ENCODE measurements at regions of chr4 and their contacts with region 1.

Region 1: DNA sequence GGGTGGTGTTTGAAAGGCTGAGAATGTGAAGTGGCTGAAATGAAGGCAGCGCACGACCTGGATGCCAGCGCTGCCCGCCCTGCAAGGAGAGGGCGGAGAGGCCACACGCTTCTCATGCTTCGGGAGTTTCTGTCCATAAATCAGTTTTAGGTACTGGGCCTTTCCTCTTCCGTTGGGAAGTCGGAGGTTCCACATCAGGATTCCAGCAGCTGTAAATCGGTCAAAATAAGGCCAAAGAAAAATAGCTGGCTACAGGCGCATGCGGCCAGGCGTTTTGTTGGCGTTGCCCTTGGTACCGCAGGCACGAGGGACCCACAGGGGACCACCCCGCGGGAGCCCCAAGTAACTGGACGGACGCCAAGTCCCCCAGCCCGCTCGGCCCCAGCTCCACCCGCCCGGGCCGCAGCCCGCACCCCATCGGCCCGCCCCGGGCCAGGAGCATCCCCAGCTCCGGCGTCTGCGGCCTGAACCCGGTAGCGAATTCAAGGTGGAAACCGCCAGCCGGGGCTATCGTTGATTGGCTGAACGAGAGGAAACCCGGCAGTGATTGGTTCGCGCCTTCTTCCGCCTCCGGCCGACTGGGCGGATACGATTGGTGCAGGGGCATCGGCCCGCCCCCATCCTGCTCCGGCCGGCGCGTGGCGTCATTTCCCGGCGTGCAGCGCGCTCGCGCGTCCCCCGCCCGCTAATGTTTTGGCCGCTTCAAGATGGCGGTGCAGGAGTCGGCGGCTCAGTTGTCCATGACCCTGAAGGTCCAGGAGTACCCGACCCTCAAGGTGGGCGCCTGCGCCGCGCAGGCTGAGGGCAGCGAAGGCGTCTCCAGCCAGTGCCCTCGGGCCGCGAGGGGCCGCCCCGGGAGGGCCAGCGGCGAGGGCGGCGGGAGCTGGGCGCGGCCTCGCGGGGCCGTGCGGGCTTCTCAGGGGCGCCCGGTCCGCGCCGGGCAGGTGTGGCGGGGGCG is at the start of gene MAEA:
- DNase-seq: peak; percentile 96
- H3K4me3 Mint-ChIP-seq: peak within 1 kb of the TSS; percentile 95
- H3K27ac Mint-ChIP-seq: peak within 1 kb of the TSS; percentile 95
- H3K4me1 Mint-ChIP-seq: peaks cover 22% of the 10 kb centered on the region
- H3K27me3 Mint-ChIP-seq: no peaks in the 10 kb centered on the region
- CTCF ChIP-seq: no peak
- total RNA-seq, gene MAEA: 78.8 and 89.6 TPM in 2 replicates

Region 2: DNA sequence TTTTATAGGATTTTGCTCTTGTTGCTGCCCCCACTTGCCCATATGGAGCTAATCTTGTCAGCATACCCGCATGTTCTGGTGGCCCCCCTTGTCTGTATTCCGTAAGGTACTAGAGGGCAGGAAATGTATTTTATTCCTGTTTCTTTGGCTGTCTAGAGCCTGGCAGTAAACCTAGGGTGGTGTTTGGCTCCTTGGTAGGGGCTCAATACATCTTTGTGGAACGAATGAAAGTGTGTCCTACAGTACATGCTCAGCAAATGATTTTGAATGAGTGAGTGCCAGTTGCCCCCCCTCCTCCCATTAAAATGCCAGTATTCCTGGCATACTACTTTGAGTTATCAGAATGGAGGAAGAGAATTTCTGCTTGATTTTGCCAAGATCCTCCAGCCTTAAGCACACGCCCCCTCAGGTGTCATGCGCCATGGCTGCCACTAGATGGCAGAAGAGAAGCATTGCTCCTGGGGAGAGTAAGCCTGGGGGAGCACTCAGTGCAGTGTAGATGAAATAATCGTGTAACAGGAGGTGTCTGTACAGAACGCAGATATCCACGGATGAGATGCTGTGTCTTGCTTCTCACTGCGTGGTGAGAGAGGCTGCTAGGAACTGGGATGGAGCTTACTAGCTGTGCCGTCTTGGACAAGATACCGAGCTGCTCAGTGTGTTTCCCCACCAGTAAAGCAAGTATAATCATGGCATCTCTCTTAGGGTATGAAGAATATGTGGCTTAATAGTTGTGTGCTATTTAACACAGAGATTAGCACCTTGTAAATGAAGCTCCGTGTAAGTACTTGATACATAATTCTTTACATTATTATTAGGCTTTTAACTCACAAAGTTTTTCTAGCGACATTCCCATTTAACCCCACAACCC is 158.9 kb before region 1 on chr4:
- CTCF ChIA-PET with region 1: interaction called, 15 read pairs
- POLR2A ChIA-PET with region 1: no interaction called
- intact Hi-C with region 1: no loop called
- DNase-seq: peak; percentile 79
- H3K4me3 Mint-ChIP-seq: no peak overlapping the region
- H3K27ac Mint-ChIP-seq: no peak overlapping the region
- H3K4me1 Mint-ChIP-seq: no peaks in the 10 kb centered on the region
- H3K27me3 Mint-ChIP-seq: peaks cover 47% of the 10 kb centered on the region
- CTCF ChIP-seq: peak; percentile 99

Region 3: GRCh38 chr4:1249148-1249730 is 40.2 kb before region 1 on chr4:
- CTCF ChIA-PET with region 1: no interaction called
- POLR2A ChIA-PET with region 1: interaction called, 41 read pairs
- intact Hi-C with region 1: no loop called
- DNase-seq: peak; percentile 80
- H3K4me3 Mint-ChIP-seq: peak overlapping the region; percentile 83
- H3K27ac Mint-ChIP-seq: peak overlapping the region; percentile 81
- H3K4me1 Mint-ChIP-seq: no peaks in the 10 kb centered on the region
- H3K27me3 Mint-ChIP-seq: no peaks in the 10 kb centered on the region
- CTCF ChIP-seq: no peak

Region 4: DNA sequence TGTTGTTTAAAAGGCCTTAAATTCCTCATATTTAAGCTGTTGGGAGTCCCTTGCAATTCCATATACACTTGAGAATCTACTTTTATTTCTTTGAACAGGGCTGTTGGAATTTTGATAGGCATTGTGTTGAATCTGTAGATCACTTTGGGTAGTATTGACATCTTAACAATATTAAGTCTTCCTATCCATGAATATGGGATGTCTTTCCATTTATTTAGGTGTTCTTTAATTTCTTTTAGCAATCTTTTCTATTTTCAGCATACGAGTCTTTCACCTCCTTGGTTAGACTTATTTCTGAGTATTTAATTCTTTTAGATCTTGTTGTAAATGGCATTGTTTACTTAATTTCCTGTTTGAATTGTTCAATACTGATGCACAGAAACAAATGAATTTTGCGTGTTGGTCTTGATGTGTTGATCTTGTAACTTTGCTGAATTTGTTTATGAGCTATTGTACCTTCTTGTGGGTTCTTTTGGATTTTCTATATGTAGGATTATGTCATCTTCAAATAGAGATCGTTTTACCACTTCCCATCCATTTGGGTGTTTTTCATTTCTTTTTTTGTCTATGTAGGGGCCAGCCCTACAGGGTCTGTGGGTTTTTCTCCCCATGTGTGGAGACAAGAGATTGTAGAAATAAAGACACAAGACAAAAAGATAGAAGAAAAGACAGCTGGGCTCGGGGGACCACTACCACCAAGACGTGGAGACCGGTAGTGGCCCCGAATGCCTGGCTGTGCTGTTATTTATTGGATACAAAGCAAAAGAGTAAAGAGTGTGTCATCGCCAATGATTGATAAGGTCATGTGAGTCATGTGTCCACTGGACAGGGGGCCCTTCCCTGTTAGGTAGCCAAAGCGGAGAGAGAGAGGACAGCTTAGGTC is 22.4 kb before region 1 on chr4:
- CTCF ChIA-PET with region 1: interaction called, 11 read pairs
- POLR2A ChIA-PET with region 1: interaction called, 4 read pairs
- intact Hi-C with region 1: no loop called
- DNase-seq: no peak
- H3K4me3 Mint-ChIP-seq: no peak overlapping the region
- H3K27ac Mint-ChIP-seq: no peak overlapping the region
- H3K4me1 Mint-ChIP-seq: no peaks in the 10 kb centered on the region
- H3K27me3 Mint-ChIP-seq: peaks cover 2% of the 10 kb centered on the region
- CTCF ChIP-seq: no peak

Region 5: DNA sequence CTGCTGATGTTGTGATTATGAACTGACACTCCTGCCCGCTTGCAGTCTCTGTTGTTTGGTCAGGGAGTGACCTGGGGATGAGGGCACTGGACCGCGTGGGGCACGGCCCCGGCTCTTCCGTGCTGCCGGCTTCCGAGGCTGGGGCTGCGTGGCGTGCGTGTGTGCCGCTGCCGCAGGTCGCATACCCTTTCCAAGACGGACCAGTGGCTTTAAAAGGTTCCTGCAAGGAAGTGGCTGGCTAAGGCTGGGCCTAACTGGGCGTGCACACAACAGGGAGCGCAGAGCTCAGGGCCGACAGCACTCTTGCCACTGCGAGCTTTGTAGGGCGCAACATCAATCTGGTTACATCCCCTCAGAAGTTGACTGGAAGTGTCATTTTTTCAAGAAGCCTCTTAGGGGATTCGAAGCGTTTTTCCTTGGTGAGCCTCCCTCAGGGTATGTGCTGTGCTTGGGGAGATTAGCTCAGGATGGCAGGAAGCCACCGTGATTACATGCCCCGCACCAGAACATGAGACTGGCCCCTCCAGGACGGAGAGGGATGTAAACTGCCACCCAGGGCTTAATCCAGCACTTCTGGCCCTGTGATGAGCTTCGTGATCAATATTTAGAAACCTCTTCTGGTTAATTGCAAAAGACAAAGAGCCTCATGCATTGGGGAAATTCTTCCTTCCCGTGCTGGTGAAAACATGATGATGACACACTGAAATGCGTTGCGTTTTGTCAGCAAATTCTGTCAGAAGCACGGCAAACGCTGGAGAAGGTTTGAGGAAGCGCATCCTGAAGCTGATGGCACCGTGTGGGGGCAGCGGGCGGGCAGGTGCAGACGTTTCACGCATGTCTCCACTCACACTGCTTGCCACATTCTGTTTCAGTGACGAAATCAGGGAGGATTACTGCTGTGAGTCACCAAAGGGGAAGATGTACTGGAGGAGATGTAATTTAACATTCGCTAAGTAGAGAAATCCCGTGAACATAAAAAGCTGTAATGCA is 11.3 kb after region 1 on chr4:
- CTCF ChIA-PET with region 1: interaction called, 9 read pairs
- POLR2A ChIA-PET with region 1: interaction called, 87 read pairs
- intact Hi-C with region 1: no loop called
- DNase-seq: peak; percentile 96
- H3K4me3 Mint-ChIP-seq: peak overlapping the region; percentile 4
- H3K27ac Mint-ChIP-seq: peak overlapping the region; percentile 70
- H3K4me1 Mint-ChIP-seq: peaks cover 47% of the 10 kb centered on the region
- H3K27me3 Mint-ChIP-seq: no peaks in the 10 kb centered on the region
- CTCF ChIP-seq: no peak

Region 6: GRCh38 chr4:1329408-1330371 is 40.2 kb after region 1 on chr4:
- CTCF ChIA-PET with region 1: no interaction called
- POLR2A ChIA-PET with region 1: interaction called, 47 read pairs
- intact Hi-C with region 1: no loop called
- DNase-seq: peak; percentile 85
- H3K4me3 Mint-ChIP-seq: peak overlapping the region; percentile 57
- H3K27ac Mint-ChIP-seq: peak overlapping the region; percentile 95
- H3K4me1 Mint-ChIP-seq: peaks cover 22% of the 10 kb centered on the region
- H3K27me3 Mint-ChIP-seq: no peaks in the 10 kb centered on the region
- CTCF ChIP-seq: no peak

Region 7: DNA sequence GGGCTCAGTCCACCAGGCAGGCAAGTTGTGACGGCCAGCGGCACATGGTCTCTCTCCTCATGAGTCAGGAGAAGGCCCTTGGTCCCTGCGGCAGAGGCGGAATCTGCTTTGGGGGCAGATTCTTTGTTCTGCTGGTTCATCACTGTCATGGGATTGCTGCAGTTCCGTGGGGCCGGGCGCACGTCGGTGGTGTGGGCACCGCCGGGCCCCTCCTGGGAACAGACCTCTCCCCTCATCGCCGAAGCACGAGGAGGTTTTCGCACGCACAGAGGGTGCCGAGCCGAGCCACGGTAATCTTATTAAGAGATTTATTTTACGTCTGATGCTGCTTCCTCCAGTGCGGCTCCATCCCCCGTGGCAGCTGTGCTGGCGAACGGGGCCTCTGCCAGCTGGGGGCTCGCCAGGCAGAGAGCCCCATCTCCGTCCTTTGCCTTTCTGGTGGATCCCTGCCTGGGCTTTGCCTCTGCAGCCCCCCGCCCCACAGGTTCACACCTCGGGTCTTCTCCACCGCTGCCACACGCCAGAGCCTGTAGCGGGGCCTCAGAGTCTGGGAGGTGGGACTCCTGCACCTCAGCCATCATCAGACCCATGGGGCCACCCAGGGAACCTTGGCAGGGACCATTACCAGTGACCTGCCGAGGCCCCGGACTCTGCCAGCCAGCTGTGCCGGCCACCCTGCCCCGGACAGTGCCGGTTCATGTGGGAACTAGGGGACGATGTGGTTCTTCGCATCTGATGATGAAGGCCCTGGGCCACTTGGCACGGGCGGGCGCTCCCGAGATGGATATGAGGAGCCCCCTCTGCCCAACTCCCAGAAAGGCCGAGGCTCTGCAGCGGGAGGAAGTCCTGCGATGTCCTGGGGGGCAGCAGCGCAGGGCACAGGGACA is 203.4 kb after region 1 on chr4:
- CTCF ChIA-PET with region 1: no interaction called
- POLR2A ChIA-PET with region 1: no interaction called
- intact Hi-C with region 1: no loop called
- DNase-seq: no peak
- H3K4me3 Mint-ChIP-seq: no peak overlapping the region
- H3K27ac Mint-ChIP-seq: no peak overlapping the region
- H3K4me1 Mint-ChIP-seq: no peaks in the 10 kb centered on the region
- H3K27me3 Mint-ChIP-seq: peaks cover 11% of the 10 kb centered on the region
- CTCF ChIP-seq: no peak

Measured in MCF 10A (cell line).